ENCODE measurements at regions of chr11 and their contacts with region 1.

Region 1: DNA sequence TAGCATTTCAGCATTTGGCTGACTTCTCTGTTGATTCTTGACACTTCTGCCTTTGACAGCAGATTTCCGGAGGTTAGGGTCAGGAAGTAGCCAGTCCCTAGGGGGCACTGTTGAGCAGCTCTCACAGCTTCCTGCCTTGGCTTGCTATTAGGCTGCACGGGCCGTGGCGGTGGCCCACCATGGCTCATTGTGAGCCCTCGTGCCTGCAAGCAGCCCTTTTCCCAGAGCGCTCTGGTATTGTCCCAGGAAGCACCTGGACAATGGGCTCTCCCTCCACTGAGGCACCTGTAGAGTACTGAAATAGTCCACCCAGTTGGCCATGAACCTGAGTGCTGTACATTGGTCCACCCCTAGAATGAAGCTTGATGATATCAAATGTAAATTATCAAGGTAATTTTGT is 100.2 kb upstream of the GAL start:
- DNase-seq: peak in 3 of 10 donors; percentile 34 to 77 (median 39)

Region 2: DNA sequence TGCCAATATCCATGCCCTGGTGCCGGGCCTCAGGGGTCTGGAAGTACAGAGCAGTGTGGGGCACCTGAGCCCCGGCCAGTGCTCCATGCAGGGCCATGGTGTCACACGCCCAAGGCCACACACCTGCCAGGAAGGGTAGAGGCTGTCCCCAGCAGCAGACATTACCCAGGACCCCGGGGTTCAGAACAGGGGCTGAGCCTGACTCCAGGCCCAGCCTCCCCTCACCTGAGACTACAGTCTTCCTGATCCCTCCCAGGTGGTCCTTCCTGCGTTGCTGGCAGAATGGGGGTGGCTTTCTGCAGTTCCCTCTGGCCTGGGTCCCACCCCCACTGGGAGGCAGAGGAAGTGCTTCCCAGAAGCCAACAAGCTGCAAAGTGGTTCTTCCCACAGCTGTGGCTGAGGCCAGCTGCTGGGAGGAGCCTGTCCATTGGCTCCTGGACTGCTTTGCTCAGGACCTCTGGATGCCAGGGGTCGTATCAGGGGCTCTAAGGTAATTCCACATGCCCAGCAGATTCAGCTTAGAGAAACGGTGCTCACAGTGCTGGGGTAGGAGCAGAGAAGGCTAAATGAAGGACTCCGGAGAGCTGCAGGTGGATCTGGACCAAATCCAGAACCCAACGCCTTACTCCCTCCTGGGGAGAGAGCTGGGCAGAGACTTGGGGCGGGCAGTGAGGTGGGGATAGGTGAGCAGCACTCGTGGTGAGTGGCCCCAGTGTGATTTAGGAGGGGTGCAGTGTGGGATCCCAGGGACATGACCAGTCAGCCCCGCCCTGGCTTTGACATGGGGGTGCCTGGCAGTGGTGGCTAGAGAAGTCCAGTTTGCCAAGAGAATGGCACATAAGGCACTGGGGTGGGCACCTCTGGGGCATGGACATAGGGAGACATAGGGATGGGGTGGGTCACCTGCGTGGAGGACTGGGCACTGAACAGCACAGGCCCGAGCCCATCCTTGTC is 532.6 kb before region 1 on chr11:
- intact Hi-C with region 1: no loop called
- DNase-seq: peak in 1 of 10 donors; percentile 79

Region 3: DNA sequence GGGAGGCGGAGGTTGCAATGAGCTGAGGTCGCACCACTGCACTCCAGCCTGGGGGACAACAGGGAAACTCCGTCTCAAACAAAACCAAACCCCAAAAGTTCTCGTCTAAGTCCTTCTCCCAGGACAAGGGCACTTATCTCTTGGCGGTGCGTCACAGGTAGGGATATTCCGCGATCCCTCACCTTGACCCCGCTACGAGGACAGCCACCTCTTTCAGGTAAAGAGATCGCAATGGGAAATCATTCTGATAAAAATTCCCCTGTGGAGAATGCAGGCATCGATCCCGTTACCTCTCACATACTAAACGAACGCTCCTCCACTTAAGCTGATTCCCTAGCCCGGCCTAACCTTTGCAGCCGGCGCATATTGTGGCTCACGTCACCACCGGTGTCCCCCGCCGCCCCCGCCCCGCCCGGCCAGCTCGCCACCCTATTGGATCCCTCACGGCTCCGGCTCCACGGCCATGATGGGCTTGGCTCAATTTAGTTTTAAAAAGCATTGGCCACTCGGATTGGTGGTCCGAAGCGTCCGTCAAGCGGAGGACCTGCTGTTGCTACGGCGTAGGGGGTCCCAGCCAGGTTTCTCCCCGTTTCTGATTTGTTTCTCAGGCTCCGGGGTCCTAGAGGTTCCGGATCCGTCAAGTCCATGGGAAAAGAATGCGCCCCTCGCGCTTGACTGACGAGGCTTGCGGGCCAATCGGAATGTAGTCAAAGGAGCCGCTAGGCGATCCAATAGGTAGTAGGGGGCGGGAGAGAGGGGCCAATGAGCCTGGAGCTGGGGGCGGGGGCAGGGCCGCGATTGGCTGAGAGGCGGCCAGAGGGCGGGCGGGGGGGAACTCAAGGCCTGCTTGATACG is 124.0 kb before region 1 on chr11:
- intact Hi-C with region 1: loop called (anchors 10 kb)
- DNase-seq: peak; percentile 92 to 99 (median 96)

Region 4: DNA sequence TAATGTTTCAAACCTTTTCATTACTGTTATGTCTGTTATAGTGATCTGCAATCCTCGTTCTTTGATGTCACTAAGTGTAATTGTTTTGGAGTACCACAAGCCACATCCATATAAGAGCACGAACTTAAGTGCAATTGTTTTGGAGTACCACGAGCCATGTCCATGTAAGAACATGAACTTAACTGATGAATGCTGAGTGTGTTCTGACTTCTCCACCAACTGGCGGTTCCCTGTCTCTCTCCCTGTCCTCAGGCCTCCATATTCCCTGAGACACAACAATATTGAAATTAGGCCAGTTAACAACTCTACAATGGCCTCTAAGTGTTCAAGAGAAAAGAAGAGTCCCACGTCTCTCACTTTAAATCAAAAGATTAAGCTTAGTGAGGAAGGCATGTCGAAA is 143.7 kb after region 1 on chr11:
- intact Hi-C with region 1: no loop called
- DNase-seq: no peak

Measured in posterior cingulate gyrus (tissue), 11 donors.